ENCODE measurements at regions of chr14 and their contacts with region 1.

Region 1: DNA sequence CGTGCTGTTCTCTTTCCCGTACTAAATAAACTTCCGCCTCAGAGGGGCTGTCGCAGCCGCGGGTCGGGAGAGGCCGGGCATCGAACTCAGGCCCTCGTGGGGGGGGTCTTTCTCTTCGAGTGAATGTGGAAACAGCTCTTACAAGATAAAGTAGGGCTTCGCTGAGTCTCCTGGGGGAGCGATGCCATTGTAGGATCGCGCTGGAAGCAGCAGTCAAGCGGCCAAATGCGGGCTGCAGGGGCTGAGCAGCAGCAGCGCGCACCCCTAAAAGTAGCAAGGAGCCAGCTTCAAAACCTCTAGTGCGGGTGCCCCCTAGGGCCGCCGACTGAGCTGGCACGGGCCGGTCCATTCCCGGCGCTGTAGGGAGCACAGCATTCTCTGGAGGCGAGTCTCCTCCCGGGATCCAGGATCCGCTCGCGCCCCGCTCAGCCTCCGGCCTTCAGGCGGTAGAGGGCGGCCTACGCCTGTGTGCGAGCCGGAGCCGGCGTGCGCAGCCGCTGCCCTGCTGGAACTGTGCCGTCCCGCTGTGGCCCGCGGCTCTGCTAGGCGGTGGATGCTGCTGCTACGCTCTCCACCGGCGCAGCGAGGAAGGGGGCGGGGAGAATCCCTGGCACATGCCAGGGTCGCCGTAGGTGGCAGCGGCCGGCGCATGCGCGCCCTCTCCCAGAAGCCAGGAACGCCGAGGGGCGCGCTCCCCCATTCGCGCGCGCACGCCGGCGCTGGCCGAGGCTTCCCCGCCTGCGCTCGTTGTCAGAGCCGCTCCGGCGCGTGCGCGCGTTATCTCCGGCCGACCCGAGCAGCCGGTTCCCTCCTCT is at the start of gene FUT8:
- DNase-seq: peak; percentile 85 to 98 (median 94)
- ATAC-seq: peak; percentile 88 to 91 (median 88)
- H3K4me3 ChIP-seq: peak within 1 kb of the TSS; percentile 85 to 94
- H3K4me3 Mint-ChIP-seq: peak within 1 kb of the TSS; percentile 92 to 99 (median 99)
- H3K27ac ChIP-seq: peak within 1 kb of the TSS; percentile 75
- H3K27ac Mint-ChIP-seq: peak within 1 kb of the TSS; percentile 99 to 100
- H3K4me1 ChIP-seq: peaks cover 6 to 20% of the 10 kb centered on the region in 2 experiments
- H3K4me1 Mint-ChIP-seq: peaks cover 40 to 50% (median 41%) of the 10 kb centered on the region in 3 donors
- H3K27me3 ChIP-seq: no peaks in the 10 kb centered on the region
- H3K27me3 Mint-ChIP-seq: no peaks in the 10 kb centered on the region
- total RNA-seq, gene FUT8: 37.6 to 51.7 (median 43.9) TPM

Region 2: GRCh38 chr14:65170768-65171507 is 241.3 kb before region 1 on chr14:
- CTCF ChIA-PET with region 1: interaction called in 1 of 2 experiments, 13 read pairs
- POLR2A ChIA-PET with region 1: no interaction called
- DNase-seq: peak in 30 of 35 experiments; percentile 3 to 50 (median 18)
- ATAC-seq: peak; percentile 73 to 91 (median 78)
- H3K4me3 ChIP-seq: peak overlapping the region; percentile 35 to 84
- H3K4me3 Mint-ChIP-seq: peak overlapping the region; percentile 61 to 72 (median 62)
- H3K27ac ChIP-seq: no peak overlapping the region
- H3K27ac Mint-ChIP-seq: no peak overlapping the region
- H3K4me1 ChIP-seq: peaks cover 2 to 9% of the 10 kb centered on the region in 2 experiments
- H3K4me1 Mint-ChIP-seq: peaks cover 10 to 17% (median 12%) of the 10 kb centered on the region in 3 donors
- H3K27me3 ChIP-seq: peaks cover 0 to 11% of the 10 kb centered on the region in 2 experiments
- H3K27me3 Mint-ChIP-seq: peaks cover 4 to 5% of the 10 kb centered on the region in 2 donors

Region 3: GRCh38 chr14:65824285-65824977 is 412.2 kb after region 1 on chr14:
- CTCF ChIA-PET with region 1: interaction called, 8 to 58 read pairs
- POLR2A ChIA-PET with region 1: no interaction called
- DNase-seq: peak; percentile 12 to 79 (median 40)
- ATAC-seq: peak; percentile 76 to 96 (median 90)
- H3K4me3 ChIP-seq: no peak overlapping the region
- H3K4me3 Mint-ChIP-seq: no peak overlapping the region
- H3K27ac ChIP-seq: no peak overlapping the region
- H3K27ac Mint-ChIP-seq: peak overlapping the region in 1 of 2 donors; percentile 47
- H3K4me1 ChIP-seq: peaks cover 0 to 8% of the 10 kb centered on the region in 2 experiments
- H3K4me1 Mint-ChIP-seq: peaks cover 10 to 18% (median 14%) of the 10 kb centered on the region in 3 donors
- H3K27me3 ChIP-seq: no peaks in the 10 kb centered on the region
- H3K27me3 Mint-ChIP-seq: no peaks in the 10 kb centered on the region

Region 4: DNA sequence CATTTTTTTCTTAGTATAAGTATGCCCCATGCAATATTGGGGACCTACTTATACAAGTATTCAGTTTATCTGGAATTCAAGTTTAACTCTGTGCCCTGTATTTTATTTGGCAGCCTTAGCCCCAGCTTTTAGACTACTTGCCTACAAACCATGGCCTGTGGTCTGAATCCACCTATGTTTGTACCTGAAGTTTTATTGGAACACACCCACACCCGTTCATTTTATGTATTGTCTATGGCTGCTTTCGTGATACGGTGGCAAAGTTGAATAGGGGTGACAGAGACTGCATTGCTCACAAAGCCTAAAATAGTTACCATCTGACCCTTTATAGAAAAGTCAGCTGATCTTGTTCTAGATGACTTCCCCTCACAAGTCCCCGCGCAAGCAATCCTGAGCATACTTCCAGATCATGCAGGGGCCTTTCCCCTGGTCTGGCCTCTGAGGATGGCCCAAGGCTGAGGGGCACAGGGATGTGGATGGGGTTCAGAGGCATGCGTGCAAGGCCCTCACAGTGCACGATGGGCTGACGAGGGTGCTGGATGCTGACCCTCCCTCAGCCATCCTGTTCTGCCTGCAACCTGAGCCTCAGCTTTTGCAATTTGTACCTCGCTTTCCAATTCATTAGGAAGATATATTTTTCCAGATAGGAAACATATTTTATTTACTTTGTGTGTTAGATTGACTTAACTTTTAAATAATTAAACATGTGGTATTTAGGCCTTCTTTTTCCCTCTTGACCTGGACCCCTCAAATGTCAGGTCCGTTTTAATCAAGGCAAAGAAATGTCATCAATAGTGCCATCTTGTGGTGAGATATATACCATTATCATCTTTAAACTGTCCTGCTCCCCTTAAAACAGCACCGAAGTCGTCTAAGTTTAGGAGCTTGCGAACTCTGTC is 546.7 kb after region 1 on chr14:
- CTCF ChIA-PET with region 1: interaction called, 12 to 73 read pairs
- POLR2A ChIA-PET with region 1: no interaction called
- DNase-seq: peak in 1 of 35 experiments; percentile 68
- ATAC-seq: peak; percentile 59 to 74 (median 62)
- H3K4me3 ChIP-seq: no peak overlapping the region
- H3K4me3 Mint-ChIP-seq: no peak overlapping the region
- H3K27ac ChIP-seq: no peak overlapping the region
- H3K27ac Mint-ChIP-seq: no peak overlapping the region
- H3K4me1 ChIP-seq: peaks cover 7 to 21% of the 10 kb centered on the region in 2 experiments
- H3K4me1 Mint-ChIP-seq: peaks cover 24 to 30% (median 27%) of the 10 kb centered on the region in 3 donors
- H3K27me3 ChIP-seq: peaks cover 0 to 3% of the 10 kb centered on the region in 2 experiments
- H3K27me3 Mint-ChIP-seq: no peaks in the 10 kb centered on the region

Region 5: GRCh38 chr14:66070509-66071319 is 658.5 kb after region 1 on chr14:
- CTCF ChIA-PET with region 1: interaction called, 6 to 44 read pairs
- POLR2A ChIA-PET with region 1: no interaction called
- DNase-seq: peak; percentile 8 to 79 (median 61)
- ATAC-seq: peak; percentile 73 to 86 (median 83)
- H3K4me3 ChIP-seq: no peak overlapping the region
- H3K4me3 Mint-ChIP-seq: no peak overlapping the region
- H3K27ac ChIP-seq: no peak overlapping the region
- H3K27ac Mint-ChIP-seq: no peak overlapping the region
- H3K4me1 ChIP-seq: no peaks in the 10 kb centered on the region
- H3K4me1 Mint-ChIP-seq: peaks cover 2 to 7% (median 5%) of the 10 kb centered on the region in 3 donors
- H3K27me3 ChIP-seq: peaks cover 0 to 4% of the 10 kb centered on the region in 2 experiments
- H3K27me3 Mint-ChIP-seq: peaks cover 4 to 7% of the 10 kb centered on the region in 2 donors

Measured in T-cell (primary cell).